ENCODE measurements at regions of chr6 and their contacts with region 1.

Region 1: DNA sequence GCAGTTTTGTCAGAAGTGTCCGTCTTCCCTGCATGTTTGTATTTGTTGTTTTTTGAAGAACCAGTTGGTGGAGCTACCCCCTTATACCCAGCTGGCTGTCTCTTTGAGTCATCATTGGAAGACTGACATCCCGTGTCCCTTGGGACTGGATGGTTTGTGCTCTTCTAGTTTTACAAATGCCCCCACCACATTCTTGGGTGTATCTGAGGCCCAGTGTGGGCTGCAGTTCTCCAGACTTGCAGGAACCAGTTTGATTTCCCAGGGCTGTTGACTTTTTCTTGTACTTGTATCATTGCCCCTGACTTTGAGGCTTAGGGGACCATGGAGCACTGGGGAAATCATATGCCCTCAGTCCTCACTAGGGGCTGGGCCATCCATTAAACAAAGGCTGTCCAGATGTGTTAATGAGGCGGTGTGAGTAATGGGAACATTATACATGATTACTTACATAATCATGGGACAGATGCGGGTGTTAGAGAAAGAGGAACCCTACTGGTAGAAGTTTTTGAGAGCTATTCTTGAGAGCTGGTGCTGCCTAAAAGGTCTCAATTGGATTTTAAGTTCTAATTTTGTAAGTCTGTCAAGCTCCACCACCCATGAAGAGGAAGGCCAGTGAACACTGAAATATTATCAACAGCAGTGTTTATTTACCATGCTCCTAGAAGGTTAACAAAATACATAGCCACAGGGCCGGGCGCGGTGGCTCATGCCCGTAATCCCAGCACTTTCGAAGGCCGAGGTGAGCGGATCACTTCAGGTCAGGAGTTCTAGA is 8.4 kb downstream of the JARID2 start:
- DNase-seq: no peak
- ATAC-seq: peak; percentile 67
- H3K4me3 Mint-ChIP-seq: peak overlapping the region; percentile 28
- H3K27ac Mint-ChIP-seq: peak overlapping the region; percentile 84
- H3K4me1 Mint-ChIP-seq: peaks cover 99% of the 10 kb centered on the region
- H3K27me3 Mint-ChIP-seq: no peaks in the 10 kb centered on the region
- CTCF ChIP-seq: no peak

Region 2: GRCh38 chr6:15131651-15132061 is 122.6 kb before region 1 on chr6:
- CTCF ChIA-PET with region 1: no interaction called
- POLR2A ChIA-PET with region 1: no interaction called
- intact Hi-C with region 1: no loop called
- DNase-seq: no peak
- ATAC-seq: no peak
- H3K4me3 Mint-ChIP-seq: no peak overlapping the region
- H3K27ac Mint-ChIP-seq: no peak overlapping the region
- H3K4me1 Mint-ChIP-seq: peaks cover 11% of the 10 kb centered on the region
- H3K27me3 Mint-ChIP-seq: no peaks in the 10 kb centered on the region
- CTCF ChIP-seq: no peak

Region 3: GRCh38 chr6:15264902-15265761 is 10.9 kb after region 1 on chr6:
- CTCF ChIA-PET with region 1: interaction called, 7 read pairs
- POLR2A ChIA-PET with region 1: interaction called, 24 read pairs
- intact Hi-C with region 1: loop called (anchors 1 kb)
- DNase-seq: no peak
- ATAC-seq: no peak
- H3K4me3 Mint-ChIP-seq: peak overlapping the region; percentile 59
- H3K27ac Mint-ChIP-seq: peak overlapping the region; percentile 42
- H3K4me1 Mint-ChIP-seq: peaks cover 93% of the 10 kb centered on the region
- H3K27me3 Mint-ChIP-seq: no peaks in the 10 kb centered on the region
- CTCF ChIP-seq: no peak

Region 4: GRCh38 chr6:15287670-15288375 is 33.6 kb after region 1 on chr6:
- CTCF ChIA-PET with region 1: no interaction called
- POLR2A ChIA-PET with region 1: interaction called, 6 read pairs
- intact Hi-C with region 1: loop called (anchors 2 kb)
- DNase-seq: peak; percentile 19
- ATAC-seq: peak; percentile 99
- H3K4me3 Mint-ChIP-seq: peak overlapping the region; percentile 72
- H3K27ac Mint-ChIP-seq: peak overlapping the region; percentile 91
- H3K4me1 Mint-ChIP-seq: peaks cover 61% of the 10 kb centered on the region
- H3K27me3 Mint-ChIP-seq: no peaks in the 10 kb centered on the region
- CTCF ChIP-seq: no peak

Region 5: GRCh38 chr6:15299430-15300131 is 45.3 kb after region 1 on chr6:
- CTCF ChIA-PET with region 1: interaction called, 3 read pairs
- POLR2A ChIA-PET with region 1: interaction called, 7 read pairs
- intact Hi-C with region 1: loop called (anchors 1 kb)
- DNase-seq: peak; percentile 59
- ATAC-seq: peak; percentile 97
- H3K4me3 Mint-ChIP-seq: peak overlapping the region; percentile 67
- H3K27ac Mint-ChIP-seq: peak overlapping the region; percentile 89
- H3K4me1 Mint-ChIP-seq: peaks cover 81% of the 10 kb centered on the region
- H3K27me3 Mint-ChIP-seq: no peaks in the 10 kb centered on the region
- CTCF ChIP-seq: no peak

Region 6: DNA sequence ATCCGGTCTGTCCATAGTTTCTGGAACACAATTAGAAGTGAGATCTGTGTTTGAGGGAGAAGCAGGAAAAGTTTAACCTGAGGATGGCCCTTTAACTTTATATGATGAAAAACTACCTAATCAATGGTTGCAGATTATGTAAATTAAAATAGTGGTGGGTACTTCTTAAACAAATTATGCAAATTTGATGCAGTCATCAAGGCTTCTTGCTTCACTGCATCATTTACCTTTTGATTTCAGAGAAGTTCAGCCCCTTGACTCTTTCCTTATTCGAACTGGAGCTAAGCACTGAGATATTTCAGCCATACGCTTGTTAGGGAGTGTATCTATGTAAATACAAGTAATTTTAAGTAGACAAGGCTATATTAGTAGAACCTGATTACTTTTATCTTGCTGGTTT is 65.4 kb after region 1 on chr6:
- CTCF ChIA-PET with region 1: interaction called, 4 read pairs
- POLR2A ChIA-PET with region 1: interaction called, 13 read pairs
- intact Hi-C with region 1: no loop called
- DNase-seq: no peak
- ATAC-seq: peak; percentile 40
- H3K4me3 Mint-ChIP-seq: no peak overlapping the region
- H3K27ac Mint-ChIP-seq: peak overlapping the region; percentile 71
- H3K4me1 Mint-ChIP-seq: peaks cover 93% of the 10 kb centered on the region
- H3K27me3 Mint-ChIP-seq: no peaks in the 10 kb centered on the region
- CTCF ChIP-seq: no peak

Region 7: DNA sequence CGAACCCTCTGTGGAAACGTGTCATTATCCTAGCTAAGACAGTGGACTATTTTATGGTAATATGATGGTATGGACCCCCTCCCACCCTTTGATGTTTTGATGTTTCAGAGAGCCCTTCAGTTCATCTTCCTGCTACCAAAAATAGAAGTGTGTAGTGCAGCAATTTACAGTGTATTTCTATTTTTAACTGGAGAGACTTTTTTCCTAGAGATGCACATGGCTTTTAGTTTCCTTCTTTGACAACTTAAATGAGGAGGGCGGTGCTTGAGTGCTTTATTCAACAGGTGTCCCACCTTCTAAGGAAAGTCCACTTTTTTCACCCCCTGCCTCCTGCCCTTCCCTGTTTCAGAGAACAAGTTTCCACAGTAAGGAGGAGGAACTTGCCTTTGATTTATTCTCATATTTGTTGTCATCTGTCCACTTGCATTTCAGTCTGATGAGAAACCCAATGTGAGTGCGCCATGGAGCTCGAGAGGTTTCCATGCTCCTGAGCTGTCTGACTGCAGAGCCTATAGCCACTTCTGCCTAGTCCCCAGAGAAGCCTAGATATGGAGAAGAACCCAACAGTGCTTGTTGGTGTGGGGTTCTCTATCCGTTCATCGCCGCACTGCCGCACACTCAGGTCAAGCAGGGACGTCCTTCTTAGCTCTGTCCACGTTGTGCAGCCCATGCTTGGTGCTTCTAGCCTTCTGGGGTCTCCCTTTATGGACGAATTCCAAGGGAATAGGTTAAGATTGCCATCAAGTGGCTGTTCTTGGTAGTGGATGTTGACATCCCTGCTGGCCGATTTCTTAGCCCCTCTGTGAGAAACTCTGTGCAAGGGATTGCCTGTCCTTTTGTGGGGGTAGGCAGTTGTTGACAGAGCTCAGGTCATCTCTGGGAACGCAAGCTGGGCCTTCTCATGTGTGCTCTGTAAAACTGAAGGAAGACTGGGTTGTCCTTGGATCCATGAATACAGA is 135.8 kb after region 1 on chr6:
- CTCF ChIA-PET with region 1: interaction called, 7 read pairs
- POLR2A ChIA-PET with region 1: no interaction called
- intact Hi-C with region 1: loop called (anchors 2 kb)
- DNase-seq: no peak
- ATAC-seq: peak; percentile 69
- H3K4me3 Mint-ChIP-seq: peak overlapping the region; percentile 42
- H3K27ac Mint-ChIP-seq: peak overlapping the region; percentile 30
- H3K4me1 Mint-ChIP-seq: peaks cover 71% of the 10 kb centered on the region
- H3K27me3 Mint-ChIP-seq: no peaks in the 10 kb centered on the region
- CTCF ChIP-seq: no peak

Region 8: DNA sequence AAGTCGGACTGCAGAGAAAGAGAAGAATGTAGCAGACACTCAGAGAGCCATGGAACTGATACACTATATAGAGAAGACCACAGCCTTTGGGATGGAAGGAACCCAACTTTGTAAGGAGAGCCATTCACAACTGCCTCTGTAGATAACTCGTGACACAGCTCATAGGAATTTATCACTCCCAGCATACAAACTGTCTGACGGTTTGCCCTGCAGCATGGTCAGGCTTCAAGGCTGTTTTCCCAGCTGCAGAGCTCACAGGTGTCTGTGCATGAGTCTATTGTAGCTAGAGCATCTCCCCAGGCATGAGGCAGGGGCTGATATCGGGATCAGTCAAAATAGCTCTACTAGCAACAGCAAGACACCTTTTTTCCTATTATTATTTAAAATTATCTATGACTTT is 539.0 kb after region 1 on chr6:
- CTCF ChIA-PET with region 1: no interaction called
- POLR2A ChIA-PET with region 1: no interaction called
- intact Hi-C with region 1: no loop called
- DNase-seq: no peak
- ATAC-seq: no peak
- H3K4me3 Mint-ChIP-seq: no peak overlapping the region
- H3K27ac Mint-ChIP-seq: no peak overlapping the region
- H3K4me1 Mint-ChIP-seq: no peaks in the 10 kb centered on the region
- H3K27me3 Mint-ChIP-seq: peaks cover 1% of the 10 kb centered on the region
- CTCF ChIP-seq: no peak

Measured in activated B cell treated with CpG ODN at 0.5 μM for 24 hours (primary cell).